Ovary (tissue), 10 donors: ENCODE measurements at regions of chr3 and their contacts with region 1.

Region 1: GRCh38 chr3:179147873-179148615 is at the start of gene PIK3CA:
- DNase-seq: peak; percentile 92 to 96 (median 93)
- H3K4me3 ChIP-seq: peak within 1 kb of the TSS; percentile 91
- H3K27ac ChIP-seq: peak within 1 kb of the TSS; percentile 96 to 100
- H3K4me1 ChIP-seq: peaks cover 5% of the 10 kb centered on the region
- H3K27me3 ChIP-seq: no peaks in the 10 kb centered on the region
- CTCF ChIP-seq: peak in 1 of 3 donors; percentile 29
- EP300 ChIP-seq: no peak
- POLR2A ChIP-seq: peak; percentile 64
- total RNA-seq, gene PIK3CA: 15.0 to 29.7 (median 23.2) TPM

Region 2: DNA sequence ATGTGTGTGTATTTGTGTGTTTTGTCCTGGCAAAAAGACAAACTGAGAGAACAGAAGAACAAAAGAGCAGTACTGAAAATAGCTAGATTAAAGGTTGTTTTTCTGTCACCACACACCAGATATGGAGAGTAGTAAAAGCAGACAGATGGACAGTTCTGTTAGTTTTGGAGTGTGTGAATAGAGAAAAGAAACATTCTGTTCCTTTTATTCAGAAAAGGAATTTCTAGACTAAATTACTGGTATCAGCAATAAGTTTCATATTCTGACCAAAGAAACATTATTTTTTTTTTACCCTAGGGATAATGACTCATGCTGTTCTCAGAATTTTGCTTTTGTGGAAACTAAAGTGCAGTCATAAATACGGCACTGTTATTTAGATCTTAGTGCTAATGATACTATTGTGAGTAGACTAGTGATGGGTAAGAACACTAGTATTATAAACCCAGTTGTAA is 33.0 kb after region 1 on chr3:
- intact Hi-C with region 1: loop called in 2 of 4 experiments (anchors 5 kb)
- DNase-seq: no peak
- H3K4me3 ChIP-seq: no peak overlapping the region
- H3K27ac ChIP-seq: peak overlapping the region; percentile 28 to 53
- H3K4me1 ChIP-seq: peaks cover 8% of the 10 kb centered on the region
- H3K27me3 ChIP-seq: no peaks in the 10 kb centered on the region
- CTCF ChIP-seq: no peak
- EP300 ChIP-seq: no peak
- POLR2A ChIP-seq: no peak

Region 3: GRCh38 chr3:179189759-179190158 is 41.7 kb after region 1 on chr3:
- intact Hi-C with region 1: loop called in 3 of 4 experiments (anchors 5 kb)
- DNase-seq: no peak
- H3K4me3 ChIP-seq: no peak overlapping the region
- H3K27ac ChIP-seq: no peak overlapping the region
- H3K4me1 ChIP-seq: peaks cover 3% of the 10 kb centered on the region
- H3K27me3 ChIP-seq: no peaks in the 10 kb centered on the region
- CTCF ChIP-seq: no peak
- EP300 ChIP-seq: no peak
- POLR2A ChIP-seq: no peak